BJ (cell line): ENCODE measurements at regions of chr11 and their contacts with region 1.

Region 1: GRCh38 chr11:62427630-62428233 is 8.9 kb downstream of the SCGB1A1 start:
- DNase-seq: no peak
- H3K4me3 ChIP-seq: no peak overlapping the region
- H3K27me3 ChIP-seq: no peaks in the 10 kb centered on the region
- CTCF ChIP-seq: no peak

Region 2: GRCh38 chr11:62413060-62413696 is 14.6 kb before region 1 on chr11:
- CTCF ChIA-PET with region 1: interaction called, 23 read pairs
- POLR2A ChIA-PET with region 1: no interaction called
- DNase-seq: no peak
- H3K4me3 ChIP-seq: no peak overlapping the region
- H3K27me3 ChIP-seq: no peaks in the 10 kb centered on the region; the same call in none of the 2 replicates
- CTCF ChIP-seq: no peak

Region 3: DNA sequence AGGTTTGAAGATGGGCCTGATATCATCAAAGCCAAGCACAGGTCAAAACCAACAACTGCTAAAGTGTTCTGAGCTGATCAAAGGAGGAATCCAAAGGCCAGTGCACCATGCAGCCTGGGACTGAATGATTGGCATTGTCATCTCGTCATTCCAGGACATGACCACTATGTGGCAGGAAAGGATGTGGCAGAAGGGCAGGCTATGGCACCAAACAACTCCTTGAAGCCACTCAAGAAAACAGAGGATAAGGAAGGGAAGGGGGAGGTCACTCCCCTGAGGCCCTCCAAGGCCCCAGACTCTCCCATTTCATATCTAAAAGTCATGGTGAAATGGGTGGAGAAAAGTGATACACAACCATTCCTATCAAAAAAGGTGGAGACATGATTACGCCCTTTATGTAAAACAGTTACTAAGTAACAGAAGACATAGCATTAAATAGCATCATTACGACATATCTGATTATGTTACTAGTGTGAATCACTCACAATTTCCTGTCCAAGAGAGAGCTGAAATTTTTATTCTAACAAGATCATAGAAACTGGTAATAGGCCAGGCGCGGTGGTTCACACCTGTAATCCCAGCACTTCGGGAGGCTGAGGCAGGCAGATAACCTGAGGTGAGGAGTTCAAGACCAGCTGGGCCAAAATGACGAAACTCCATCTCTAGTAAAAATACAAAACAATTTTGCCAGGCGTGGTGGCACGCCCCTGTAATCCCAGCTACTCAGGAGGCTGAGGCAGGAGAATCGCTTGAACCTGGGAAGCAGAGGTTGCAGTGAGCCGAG is 69.6 kb after region 1 on chr11:
- CTCF ChIA-PET with region 1: interaction called, 16 read pairs
- POLR2A ChIA-PET with region 1: no interaction called
- DNase-seq: no peak
- H3K4me3 ChIP-seq: no peak overlapping the region
- H3K27me3 ChIP-seq: no peaks in the 10 kb centered on the region
- CTCF ChIP-seq: 0 out of 2 replicates have a peak, but pooled peaks have one; percentile 20

Region 4: GRCh38 chr11:62542750-62543567 is 115.2 kb after region 1 on chr11:
- CTCF ChIA-PET with region 1: interaction called, 220 read pairs
- POLR2A ChIA-PET with region 1: interaction called, 5 read pairs
- DNase-seq: no peak
- H3K4me3 ChIP-seq: peak overlapping the region; percentile 96
- H3K27me3 ChIP-seq: no peaks in the 10 kb centered on the region
- CTCF ChIP-seq: peak; percentile 100

Region 5: DNA sequence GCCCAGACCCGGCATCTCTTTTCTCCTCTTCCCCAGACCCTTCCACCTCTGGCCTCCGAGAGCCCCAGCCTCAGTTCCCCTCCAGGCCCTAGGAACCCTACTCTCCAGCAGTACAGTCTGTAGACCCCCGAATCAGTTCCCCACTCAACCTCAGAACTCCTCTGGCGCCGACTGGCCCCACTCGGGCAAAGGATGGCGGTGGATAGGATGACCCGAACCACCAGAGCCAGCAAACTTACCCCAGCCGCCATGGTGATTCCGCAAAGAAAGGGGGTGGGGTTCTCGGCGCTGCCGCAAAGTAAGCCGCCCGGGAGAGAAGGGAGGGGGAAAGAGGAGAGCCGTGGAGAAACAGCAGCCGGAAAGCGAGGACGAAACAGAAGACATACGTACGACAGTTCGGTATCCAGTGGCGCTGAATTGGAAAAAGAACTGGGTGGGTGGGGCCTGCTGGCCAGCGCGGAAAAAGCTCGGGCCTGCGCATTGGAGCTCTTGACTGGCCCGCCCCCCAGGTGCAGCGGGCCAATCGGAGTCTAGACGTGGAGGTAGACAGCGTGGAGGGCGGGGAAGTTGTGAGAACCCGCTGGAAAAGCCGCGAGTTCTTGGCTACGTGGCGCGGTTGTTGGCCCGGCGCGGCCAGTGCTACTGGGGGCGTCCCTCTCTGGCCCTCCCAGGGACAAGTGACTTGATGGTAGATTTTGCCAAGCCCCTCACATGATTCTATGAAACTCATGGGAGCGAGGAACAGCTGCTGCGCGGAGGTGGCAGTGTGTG is 146.0 kb after region 1 on chr11 and contains the start of gene EEF1G:
- CTCF ChIA-PET with region 1: interaction called, 16 read pairs
- POLR2A ChIA-PET with region 1: interaction called, 4 read pairs
- DNase-seq: peak; percentile 100
- H3K4me3 ChIP-seq: peak within 1 kb of the TSS; percentile 63
- H3K27me3 ChIP-seq: no peaks in the 10 kb centered on the region
- CTCF ChIP-seq: no peak
- polyA plus RNA-seq, gene EEF1G: 2,358 and 2,459 TPM in 2 replicates